HEK293 (cell line): ENCODE measurements at regions of chr7 and their contacts with region 1.

Region 1: GRCh38 chr7:31443457-31443856 is 70.4 kb upstream of the ITPRID1 start:
- H3K4me3 ChIP-seq: no peak overlapping the region
- H3K27ac ChIP-seq: no peak overlapping the region
- H3K4me1 ChIP-seq: no peaks in the 10 kb centered on the region
- CTCF ChIP-seq: no peak

Region 2: GRCh38 chr7:31134246-31135188 is 308.9 kb before region 1 on chr7:
- CTCF ChIA-PET with region 1: interaction called, 10 read pairs
- POLR2A ChIA-PET with region 1: no interaction called
- H3K4me3 ChIP-seq: no peak overlapping the region
- H3K27ac ChIP-seq: no peak overlapping the region
- H3K4me1 ChIP-seq: no peaks in the 10 kb centered on the region
- CTCF ChIP-seq: no peak

Region 3: GRCh38 chr7:31432836-31433340 is 10.6 kb before region 1 on chr7:
- CTCF ChIA-PET with region 1: interaction called, 32 read pairs
- POLR2A ChIA-PET with region 1: no interaction called
- H3K4me3 ChIP-seq: no peak overlapping the region
- H3K27ac ChIP-seq: no peak overlapping the region
- H3K4me1 ChIP-seq: no peaks in the 10 kb centered on the region
- CTCF ChIP-seq: no peak

Region 4: DNA sequence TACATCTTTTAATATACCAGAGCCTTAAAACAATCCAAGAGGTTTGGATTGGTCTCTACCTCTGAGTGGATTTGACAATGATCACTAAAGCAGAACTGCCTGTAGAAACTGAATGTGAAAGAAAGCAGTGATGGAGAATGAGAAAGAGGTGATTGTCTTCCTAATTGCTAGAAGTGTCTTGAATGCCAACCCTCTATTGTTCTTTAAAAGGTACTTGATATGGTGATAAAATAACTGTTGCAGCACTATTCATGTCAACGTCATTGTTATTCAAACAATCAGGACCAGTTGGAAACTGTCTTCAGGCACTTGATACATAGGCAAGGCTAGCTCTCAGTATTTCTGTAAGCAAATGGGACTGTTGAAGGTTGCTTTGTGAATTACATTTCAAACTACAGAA is 22.6 kb after region 1 on chr7:
- CTCF ChIA-PET with region 1: interaction called, 17 read pairs
- POLR2A ChIA-PET with region 1: no interaction called
- H3K4me3 ChIP-seq: no peak overlapping the region
- H3K27ac ChIP-seq: no peak overlapping the region
- H3K4me1 ChIP-seq: no peaks in the 10 kb centered on the region
- CTCF ChIP-seq: no peak

Region 5: DNA sequence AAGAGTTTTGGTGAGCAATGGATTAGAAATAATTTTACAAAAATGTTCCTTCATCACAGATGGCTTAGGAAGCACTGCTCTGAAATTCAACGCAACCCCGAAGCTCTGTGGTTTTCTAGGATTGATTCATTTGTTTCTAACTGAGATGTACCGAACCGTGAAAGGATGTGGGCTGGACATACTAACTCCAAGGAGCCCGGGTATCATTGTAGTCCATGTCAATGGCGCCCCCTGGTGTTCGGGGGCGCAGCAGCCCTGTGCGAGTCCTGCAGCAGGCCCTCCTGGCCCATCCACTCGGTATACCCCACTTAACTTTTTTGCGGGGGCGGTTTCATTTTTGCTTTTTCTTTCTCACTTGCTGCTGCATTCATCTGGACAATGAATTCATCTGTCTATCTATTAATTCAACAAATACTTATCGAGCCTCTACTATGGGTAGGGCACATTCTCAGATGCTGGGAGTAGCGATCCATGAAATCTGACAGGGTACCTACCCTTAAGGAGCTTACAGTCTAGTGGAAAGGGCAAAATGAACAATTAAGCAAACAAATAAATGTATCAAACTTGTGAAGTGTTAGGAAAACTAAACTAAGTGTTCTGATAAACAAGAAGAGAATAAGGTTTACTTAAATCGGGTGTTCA is 45.2 kb after region 1 on chr7:
- CTCF ChIA-PET with region 1: interaction called, 16 read pairs
- POLR2A ChIA-PET with region 1: no interaction called
- H3K4me3 ChIP-seq: no peak overlapping the region
- H3K27ac ChIP-seq: no peak overlapping the region
- H3K4me1 ChIP-seq: no peaks in the 10 kb centered on the region; the same call in 1 of the 2 replicates
- CTCF ChIP-seq: no peak

Region 6: GRCh38 chr7:31986944-31987430 is 543.5 kb after region 1 on chr7:
- CTCF ChIA-PET with region 1: no interaction called
- POLR2A ChIA-PET with region 1: no interaction called
- H3K4me3 ChIP-seq: no peak overlapping the region
- H3K27ac ChIP-seq: no peak overlapping the region
- H3K4me1 ChIP-seq: no peaks in the 10 kb centered on the region
- CTCF ChIP-seq: no peak